HepG2 (cell line): ENCODE measurements at regions of chr13 and their contacts with region 1.

Region 1: DNA sequence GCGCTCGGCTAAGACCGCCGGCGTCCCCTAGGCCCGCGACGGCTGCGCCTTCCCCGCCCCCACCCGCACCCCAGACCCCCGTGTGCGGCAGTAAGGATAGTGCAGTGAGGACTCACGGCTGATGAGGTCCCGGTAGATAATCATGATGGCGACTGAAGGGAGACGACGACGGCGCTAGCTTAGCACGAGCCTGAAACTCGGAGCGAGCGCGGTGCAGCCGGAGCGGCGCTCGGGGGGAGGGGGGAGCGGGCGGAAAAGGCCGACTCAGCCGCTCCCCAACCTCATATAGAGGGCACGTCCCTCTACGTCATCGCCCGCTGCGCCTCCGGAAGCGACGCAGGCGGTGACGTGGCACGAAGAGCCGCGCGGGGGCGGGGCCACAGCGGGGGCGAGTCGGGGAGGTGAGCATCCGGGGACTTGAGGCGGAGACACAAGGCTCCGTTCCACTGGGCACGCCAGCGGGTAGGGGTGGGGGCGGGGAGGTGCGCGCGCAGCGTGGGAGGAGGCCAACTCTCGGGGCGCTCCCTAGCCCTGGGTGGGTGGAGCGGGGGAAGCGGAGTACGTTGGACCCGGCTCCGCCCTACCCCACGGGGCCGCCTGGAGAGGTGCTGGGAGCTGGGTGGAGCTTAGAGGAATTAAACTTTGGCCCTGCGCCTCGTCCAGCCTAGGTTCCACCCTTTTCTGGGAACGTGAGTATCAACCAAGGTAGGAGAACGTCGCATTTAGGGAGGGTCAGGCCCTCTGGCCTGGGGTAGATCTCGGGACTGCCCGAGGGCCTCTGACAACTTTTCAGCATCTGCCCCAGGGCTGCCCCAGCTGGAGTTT is at the start of gene TPT1:
- DNase-seq: peak; percentile 96
- ATAC-seq: peak; percentile 96
- H3K4me3 ChIP-seq: peak within 1 kb of the TSS; percentile 97 to 99 (median 97)
- H3K27ac ChIP-seq: peak within 1 kb of the TSS; percentile 98
- H3K4me1 ChIP-seq: peaks cover 50% of the 10 kb centered on the region
- H3K27me3 ChIP-seq: no peaks in the 10 kb centered on the region; a peak in 1 of 5 replicates
- CTCF ChIP-seq: peak; percentile 17; the same call in 1 of the 2 replicates
- EP300 ChIP-seq: peak; percentile 17 to 53; a peak in 3 of 4 replicates
- POLR2A ChIP-seq: peak; percentile 85 to 91
- RAD21 ChIP-seq: 0 out of 2 replicates have a peak, but pooled peaks have one; percentile 6
- total RNA-seq, gene TPT1: 2,953 and 3,643 TPM in 2 replicates

Region 2: GRCh38 chr13:45325806-45326205 is 15.3 kb before region 1 on chr13:
- CTCF ChIA-PET with region 1: no interaction called
- POLR2A ChIA-PET with region 1: interaction called, 73 read pairs
- in situ Hi-C with region 1: no loop called
- intact Hi-C with region 1: no loop called
- DNase-seq: peak; percentile 62
- ATAC-seq: peak; percentile 56
- H3K4me3 ChIP-seq: no peak overlapping the region
- H3K27ac ChIP-seq: no peak overlapping the region
- H3K4me1 ChIP-seq: peaks cover 46% of the 10 kb centered on the region
- H3K27me3 ChIP-seq: no peaks in the 10 kb centered on the region
- CTCF ChIP-seq: no peak
- EP300 ChIP-seq: no peak
- POLR2A ChIP-seq: no peak
- RAD21 ChIP-seq: no peak

Region 3: GRCh38 chr13:45417790-45418534 is 76.8 kb after region 1 on chr13 and contains the start of gene SLC25A30:
- CTCF ChIA-PET with region 1: no interaction called
- POLR2A ChIA-PET with region 1: interaction called, 47 read pairs
- in situ Hi-C with region 1: no loop called
- intact Hi-C with region 1: no loop called
- DNase-seq: peak; percentile 90
- ATAC-seq: peak; percentile 95
- H3K4me3 ChIP-seq: peak within 1 kb of the TSS; percentile 82 to 90 (median 85)
- H3K27ac ChIP-seq: peak within 1 kb of the TSS; percentile 81
- H3K4me1 ChIP-seq: peaks cover 49% of the 10 kb centered on the region
- H3K27me3 ChIP-seq: no peaks in the 10 kb centered on the region; a peak in 1 of 5 replicates
- CTCF ChIP-seq: 0 out of 2 replicates have a peak, but pooled peaks have one; percentile 13
- EP300 ChIP-seq: no peak
- POLR2A ChIP-seq: peak; percentile 65 to 91; a peak in 3 of 4 replicates
- RAD21 ChIP-seq: no peak; the same call in 1 of the 2 replicates
- total RNA-seq, gene SLC25A30: 22.5 and 51.1 TPM in 2 replicates

Region 4: GRCh38 chr13:45441633-45442032 is 100.5 kb after region 1 on chr13:
- CTCF ChIA-PET with region 1: no interaction called
- POLR2A ChIA-PET with region 1: interaction called, 14 read pairs
- in situ Hi-C with region 1: no loop called
- intact Hi-C with region 1: no loop called
- DNase-seq: peak; percentile 70
- ATAC-seq: peak; percentile 70
- H3K4me3 ChIP-seq: peak overlapping the region in 2 of 3 experiments; percentile 17 to 58; a peak in 3 of 6 replicates
- H3K27ac ChIP-seq: peak overlapping the region; percentile 86
- H3K4me1 ChIP-seq: peaks cover 92% of the 10 kb centered on the region
- H3K27me3 ChIP-seq: no peaks in the 10 kb centered on the region
- CTCF ChIP-seq: peak; percentile 60
- EP300 ChIP-seq: no peak
- POLR2A ChIP-seq: no peak
- RAD21 ChIP-seq: peak; percentile 54; the same call in 1 of the 2 replicates